ENCODE measurements at regions of chr13 and their contacts with region 1.

Region 1: GRCh38 chr13:24220086-24220703 is 59.7 kb downstream of the SPATA13 start:
- DNase-seq: peak in 1 of 2 donors; percentile 70
- ATAC-seq: peak; percentile 63 to 84 (median 80)
- H3K4me3 ChIP-seq: no peak overlapping the region
- H3K27ac ChIP-seq: peak overlapping the region in 5 of 10 donors; percentile 13 to 51 (median 30)
- H3K4me1 ChIP-seq: peaks cover 3 to 68% (median 50%) of the 10 kb centered on the region in 9 donors
- H3K27me3 ChIP-seq: no peaks in the 10 kb centered on the region
- CTCF ChIP-seq: peak; percentile 45 to 87 (median 78)

Region 2: GRCh38 chr13:23915308-23915707 is 304.9 kb before region 1 on chr13:
- intact Hi-C with region 1: loop called in 5 of 10 experiments (anchors 2 to 10 kb)
- DNase-seq: no peak
- ATAC-seq: no peak
- H3K4me3 ChIP-seq: no peak overlapping the region
- H3K27ac ChIP-seq: no peak overlapping the region
- H3K4me1 ChIP-seq: no peaks in the 10 kb centered on the region
- H3K27me3 ChIP-seq: peaks cover 0 to 35% (median 16%) of the 10 kb centered on the region in 7 donors
- CTCF ChIP-seq: no peak

Region 3: GRCh38 chr13:23921451-23921888 is 298.7 kb before region 1 on chr13:
- intact Hi-C with region 1: loop called (anchors 1 to 10 kb)
- DNase-seq: peak in 1 of 2 donors; percentile 17
- ATAC-seq: peak in 7 of 8 donors; percentile 19 to 61 (median 45)
- H3K4me3 ChIP-seq: no peak overlapping the region
- H3K27ac ChIP-seq: no peak overlapping the region
- H3K4me1 ChIP-seq: no peaks in the 10 kb centered on the region
- H3K27me3 ChIP-seq: peaks cover 0 to 13% (median 6%) of the 10 kb centered on the region in 7 donors
- CTCF ChIP-seq: peak; percentile 62 to 78 (median 76)

Region 4: GRCh38 chr13:24020375-24020830 is 199.8 kb before region 1 on chr13:
- intact Hi-C with region 1: loop called (anchors 1 to 5 kb)
- DNase-seq: peak in 1 of 2 donors; percentile 54
- ATAC-seq: peak in 6 of 8 donors; percentile 45 to 65 (median 60)
- H3K4me3 ChIP-seq: no peak overlapping the region
- H3K27ac ChIP-seq: no peak overlapping the region
- H3K4me1 ChIP-seq: peaks cover 0 to 16% (median 2%) of the 10 kb centered on the region in 9 donors
- H3K27me3 ChIP-seq: no peaks in the 10 kb centered on the region
- CTCF ChIP-seq: peak; percentile 51 to 89 (median 78)

Region 5: GRCh38 chr13:24053519-24054251 is 166.5 kb before region 1 on chr13:
- intact Hi-C with region 1: loop called in 9 of 10 experiments (anchors 1 to 10 kb)
- DNase-seq: peak in 1 of 2 donors; percentile 56
- ATAC-seq: peak; percentile 70 to 91 (median 80)
- H3K4me3 ChIP-seq: peak overlapping the region in 2 of 10 donors; percentile 1 to 27
- H3K27ac ChIP-seq: peak overlapping the region in 8 of 10 donors; percentile 5 to 69 (median 38)
- H3K4me1 ChIP-seq: peaks cover 0 to 62% (median 29%) of the 10 kb centered on the region in 9 donors
- H3K27me3 ChIP-seq: no peaks in the 10 kb centered on the region
- CTCF ChIP-seq: peak; percentile 49 to 79 (median 67)

Region 6: DNA sequence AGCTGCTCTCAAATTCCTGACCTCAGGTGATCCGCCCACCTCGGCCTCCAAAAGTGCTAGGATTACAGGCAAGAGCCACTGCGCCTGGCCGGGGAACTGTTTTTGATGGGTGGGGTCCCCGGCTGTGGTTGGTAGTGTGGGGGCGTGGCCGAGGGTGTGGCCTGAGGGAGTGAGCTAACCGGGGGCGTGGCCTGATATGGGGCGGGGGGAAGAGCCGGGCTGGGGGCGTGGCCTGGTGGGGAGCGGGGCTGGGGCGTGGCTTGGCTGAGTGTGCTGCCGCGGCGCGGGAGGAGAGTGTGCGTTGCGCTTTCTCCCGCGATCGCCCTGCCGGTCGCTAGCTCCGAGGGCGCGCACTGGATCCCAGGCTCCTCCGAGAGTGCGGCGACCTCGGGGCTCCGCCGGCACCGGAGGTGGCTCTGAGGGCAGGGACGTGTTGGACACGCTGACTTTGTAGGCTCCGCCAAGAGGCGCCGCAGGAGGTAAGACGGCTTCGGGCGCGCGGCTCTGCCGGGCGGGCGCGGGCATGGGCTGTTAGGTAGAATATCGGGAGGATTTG is 59.7 kb before region 1 on chr13 and contains the start of gene SPATA13:
- intact Hi-C with region 1: loop called in 3 of 10 experiments (anchors 5 kb)
- DNase-seq: peak; percentile 92 to 94
- ATAC-seq: peak; percentile 97 to 99 (median 98)
- H3K4me3 ChIP-seq: peak within 1 kb of the TSS; percentile 79 to 96 (median 88)
- H3K27ac ChIP-seq: peak within 1 kb of the TSS; percentile 71 to 87 (median 81)
- H3K4me1 ChIP-seq: peaks cover 0 to 41% (median 21%) of the 10 kb centered on the region in 9 donors
- H3K27me3 ChIP-seq: peaks cover 0 to 22% (median 6%) of the 10 kb centered on the region in 7 donors
- CTCF ChIP-seq: no peak
- total RNA-seq, gene SPATA13: 6.0 to 19.2 (median 10.2) TPM

Measured in heart right ventricle (tissue), 16 donors.